ENCODE measurements at regions of chr11 and their contacts with region 1.

Region 1: DNA sequence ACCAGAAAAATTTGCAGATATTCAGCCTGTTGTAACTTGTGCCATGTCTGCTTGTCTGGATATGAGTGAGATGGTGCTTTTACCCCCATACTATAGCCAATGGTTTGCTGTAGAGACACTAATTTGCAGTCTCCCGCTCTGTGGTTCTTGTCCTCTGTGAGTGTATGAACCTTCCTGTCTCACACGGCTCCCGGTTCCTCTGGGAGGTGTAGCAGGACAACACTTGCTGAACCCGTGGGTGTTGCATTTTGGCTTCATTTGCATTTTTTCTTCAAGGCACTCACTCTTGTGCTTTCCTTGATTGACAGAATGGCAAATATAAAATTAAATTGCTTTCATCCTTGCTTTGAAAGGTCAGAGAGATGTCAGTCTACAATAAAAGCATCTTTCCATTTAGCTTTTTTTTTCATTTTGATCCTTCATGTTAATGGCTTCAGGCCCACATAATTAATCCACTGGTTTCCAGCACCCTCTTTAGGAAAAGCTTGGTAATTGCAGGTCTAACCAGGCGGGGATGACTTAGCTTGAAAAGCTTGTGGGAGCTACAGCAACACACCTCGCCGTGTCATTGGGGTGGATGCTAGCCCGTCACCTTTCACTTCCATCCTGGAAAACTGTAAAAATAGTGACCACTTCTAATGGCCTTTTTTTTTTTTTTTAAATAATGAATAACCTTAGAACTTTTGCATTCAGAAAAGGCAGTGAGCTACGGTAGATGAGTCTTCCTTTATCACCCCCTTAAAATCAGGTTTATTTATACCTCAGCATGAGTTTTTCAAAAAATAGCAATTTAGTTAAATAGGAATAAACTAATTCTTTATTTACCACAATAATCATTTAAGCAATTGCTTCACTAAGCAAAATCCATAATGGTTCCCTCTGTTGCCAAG is 27.4 kb upstream of the ST14 start:
- DNase-seq: peak; percentile 58
- ATAC-seq: peak; percentile 88
- H3K4me3 Mint-ChIP-seq: no peak overlapping the region
- H3K27ac Mint-ChIP-seq: no peak overlapping the region
- H3K4me1 Mint-ChIP-seq: no peaks in the 10 kb centered on the region
- H3K27me3 Mint-ChIP-seq: no peaks in the 10 kb centered on the region

Region 2: GRCh38 chr11:129770993-129771392 is 361.2 kb before region 1 on chr11:
- CTCF ChIA-PET with region 1: no interaction called
- POLR2A ChIA-PET with region 1: no interaction called
- intact Hi-C with region 1: loop called in 1 of 2 experiments (anchors 5 kb)
- DNase-seq: no peak
- ATAC-seq: no peak
- H3K4me3 Mint-ChIP-seq: no peak overlapping the region
- H3K27ac Mint-ChIP-seq: no peak overlapping the region
- H3K4me1 Mint-ChIP-seq: no peaks in the 10 kb centered on the region
- H3K27me3 Mint-ChIP-seq: no peaks in the 10 kb centered on the region

Region 3: GRCh38 chr11:129881570-129882170 is 250.5 kb before region 1 on chr11:
- CTCF ChIA-PET with region 1: interaction called, 14 read pairs
- POLR2A ChIA-PET with region 1: no interaction called
- intact Hi-C with region 1: no loop called
- DNase-seq: peak; percentile 70
- ATAC-seq: peak; percentile 78
- H3K4me3 Mint-ChIP-seq: no peak overlapping the region
- H3K27ac Mint-ChIP-seq: no peak overlapping the region
- H3K4me1 Mint-ChIP-seq: no peaks in the 10 kb centered on the region
- H3K27me3 Mint-ChIP-seq: no peaks in the 10 kb centered on the region

Region 4: GRCh38 chr11:129911298-129911697 is 220.9 kb before region 1 on chr11:
- CTCF ChIA-PET with region 1: interaction called, 10 read pairs
- POLR2A ChIA-PET with region 1: no interaction called
- intact Hi-C with region 1: no loop called
- DNase-seq: no peak
- ATAC-seq: peak; percentile 30
- H3K4me3 Mint-ChIP-seq: no peak overlapping the region
- H3K27ac Mint-ChIP-seq: peak overlapping the region; percentile 75
- H3K4me1 Mint-ChIP-seq: peaks cover 5% of the 10 kb centered on the region
- H3K27me3 Mint-ChIP-seq: no peaks in the 10 kb centered on the region

Region 5: DNA sequence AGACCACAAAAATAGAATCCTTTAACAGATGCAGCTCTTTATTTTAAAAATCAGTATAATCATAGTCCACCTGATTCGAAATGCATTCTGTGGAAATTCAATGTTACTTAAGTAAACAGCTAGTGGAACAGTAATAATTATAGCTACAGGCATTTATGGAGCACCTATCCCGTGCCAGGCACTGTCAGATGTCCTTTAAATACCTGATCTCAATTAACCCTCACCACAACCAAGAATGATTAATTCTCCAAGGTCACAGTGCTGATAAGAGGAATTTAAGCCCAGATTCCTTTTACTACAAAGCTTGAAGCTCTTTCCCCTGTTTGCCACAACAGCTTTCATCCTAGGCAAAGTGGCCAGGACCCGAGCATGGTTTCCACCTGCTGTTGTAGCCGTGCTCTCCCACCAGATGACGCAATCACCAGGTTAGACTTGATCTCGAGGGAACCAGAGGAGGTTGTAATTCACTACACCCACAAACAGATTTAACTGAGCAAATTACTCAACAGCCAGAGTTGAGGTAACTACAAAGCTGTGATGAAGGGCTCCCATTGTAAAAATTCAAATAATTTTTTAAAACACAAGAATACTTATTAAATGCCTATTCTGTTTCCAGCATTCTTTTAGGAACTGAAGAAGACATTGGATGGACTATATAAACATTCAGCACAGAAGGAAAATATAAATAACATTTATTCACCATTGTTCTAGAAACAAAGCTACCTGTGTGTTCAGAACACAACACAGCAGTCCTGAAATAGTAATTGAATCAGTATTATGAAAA is 139.9 kb before region 1 on chr11:
- CTCF ChIA-PET with region 1: interaction called, 24 read pairs
- POLR2A ChIA-PET with region 1: no interaction called
- intact Hi-C with region 1: loop called (anchors 1 kb)
- DNase-seq: peak; percentile 73
- ATAC-seq: peak; percentile 97
- H3K4me3 Mint-ChIP-seq: no peak overlapping the region
- H3K27ac Mint-ChIP-seq: no peak overlapping the region
- H3K4me1 Mint-ChIP-seq: peaks cover 11% of the 10 kb centered on the region
- H3K27me3 Mint-ChIP-seq: no peaks in the 10 kb centered on the region

Region 6: GRCh38 chr11:130118636-130119387 is 13.4 kb before region 1 on chr11:
- CTCF ChIA-PET with region 1: interaction called, 46 read pairs
- POLR2A ChIA-PET with region 1: interaction called, 9 read pairs
- intact Hi-C with region 1: no loop called
- DNase-seq: peak; percentile 45
- ATAC-seq: peak; percentile 42
- H3K4me3 Mint-ChIP-seq: no peak overlapping the region
- H3K27ac Mint-ChIP-seq: no peak overlapping the region
- H3K4me1 Mint-ChIP-seq: peaks cover 46% of the 10 kb centered on the region
- H3K27me3 Mint-ChIP-seq: peaks cover 4% of the 10 kb centered on the region

Measured in activated CD4-positive, alpha-beta T cell treated with anti-CD3 and anti-CD28 coated beads for 36 hours (primary cell).